Panc1 (cell line): ENCODE measurements at regions of chr22 and their contacts with region 1.

Region 1: DNA sequence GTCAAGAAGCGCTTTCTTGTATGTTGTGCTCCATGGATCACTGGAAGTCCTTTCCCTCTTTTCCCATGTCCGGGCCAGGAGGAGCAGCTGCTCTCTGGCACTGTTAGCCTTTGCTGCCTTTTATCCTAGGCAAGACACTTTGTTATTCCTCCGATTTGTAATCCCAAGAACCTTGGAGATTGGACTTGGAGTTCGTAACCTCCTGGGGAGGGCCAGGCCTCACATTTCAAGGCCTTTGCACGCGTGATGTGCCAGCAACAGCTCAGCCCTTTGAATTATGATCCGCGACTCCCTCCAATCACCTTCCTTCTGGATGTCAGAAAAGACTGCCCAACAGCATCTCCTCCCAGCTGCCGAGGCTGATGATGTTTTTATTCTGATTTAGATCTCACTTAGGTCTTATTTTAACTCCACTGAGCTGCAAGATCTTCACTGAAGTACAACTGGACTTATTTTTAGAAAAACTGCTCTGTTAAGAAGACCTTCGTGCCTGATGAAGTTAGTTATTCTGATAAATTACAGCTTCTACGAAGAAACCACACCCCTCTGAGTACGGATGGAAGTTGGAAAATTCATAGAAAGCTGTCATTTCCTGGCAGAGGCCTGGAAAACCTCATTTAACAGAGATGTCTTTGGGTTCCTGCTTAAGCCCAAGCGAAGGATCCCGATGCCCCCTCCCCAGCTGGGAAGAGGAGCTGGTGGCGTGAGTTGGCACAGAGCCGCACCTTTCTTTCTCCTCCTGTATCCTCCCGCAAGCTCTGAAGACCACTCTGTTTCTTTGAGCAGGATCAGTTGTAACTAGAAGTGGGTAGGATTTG is 62.4 kb downstream of the PARVB start:
- DNase-seq: no peak
- ATAC-seq: no peak
- H3K4me3 ChIP-seq: no peak overlapping the region
- H3K27ac ChIP-seq: no peak overlapping the region
- H3K4me1 ChIP-seq: no peaks in the 10 kb centered on the region
- H3K27me3 ChIP-seq: no peaks in the 10 kb centered on the region
- CTCF ChIP-seq: no peak

Region 2: GRCh38 chr22:44003405-44004103 is 82.9 kb before region 1 on chr22:
- CTCF ChIA-PET with region 1: no interaction called
- POLR2A ChIA-PET with region 1: no interaction called
- in situ Hi-C with region 1: no loop called
- intact Hi-C with region 1: no loop called
- DNase-seq: no peak
- ATAC-seq: no peak
- H3K4me3 ChIP-seq: no peak overlapping the region
- H3K27ac ChIP-seq: no peak overlapping the region
- H3K4me1 ChIP-seq: no peaks in the 10 kb centered on the region
- H3K27me3 ChIP-seq: no peaks in the 10 kb centered on the region
- CTCF ChIP-seq: no peak

Region 3: GRCh38 chr22:44151676-44152075 is 65.2 kb after region 1 on chr22:
- CTCF ChIA-PET with region 1: interaction called, 13 read pairs
- POLR2A ChIA-PET with region 1: no interaction called
- in situ Hi-C with region 1: no loop called
- intact Hi-C with region 1: no loop called
- DNase-seq: no peak
- ATAC-seq: no peak
- H3K4me3 ChIP-seq: no peak overlapping the region
- H3K27ac ChIP-seq: no peak overlapping the region
- H3K4me1 ChIP-seq: no peaks in the 10 kb centered on the region
- H3K27me3 ChIP-seq: no peaks in the 10 kb centered on the region
- CTCF ChIP-seq: no peak

Region 4: GRCh38 chr22:44479662-44480061 is 393.2 kb after region 1 on chr22:
- CTCF ChIA-PET with region 1: no interaction called
- POLR2A ChIA-PET with region 1: no interaction called
- in situ Hi-C with region 1: no loop called
- intact Hi-C with region 1: no loop called
- DNase-seq: no peak
- ATAC-seq: no peak
- H3K4me3 ChIP-seq: no peak overlapping the region
- H3K27ac ChIP-seq: no peak overlapping the region
- H3K4me1 ChIP-seq: no peaks in the 10 kb centered on the region
- H3K27me3 ChIP-seq: no peaks in the 10 kb centered on the region
- CTCF ChIP-seq: no peak